GM18951 (cell line): ENCODE measurements at regions of chr19 and their contacts with region 1.

Region 1: DNA sequence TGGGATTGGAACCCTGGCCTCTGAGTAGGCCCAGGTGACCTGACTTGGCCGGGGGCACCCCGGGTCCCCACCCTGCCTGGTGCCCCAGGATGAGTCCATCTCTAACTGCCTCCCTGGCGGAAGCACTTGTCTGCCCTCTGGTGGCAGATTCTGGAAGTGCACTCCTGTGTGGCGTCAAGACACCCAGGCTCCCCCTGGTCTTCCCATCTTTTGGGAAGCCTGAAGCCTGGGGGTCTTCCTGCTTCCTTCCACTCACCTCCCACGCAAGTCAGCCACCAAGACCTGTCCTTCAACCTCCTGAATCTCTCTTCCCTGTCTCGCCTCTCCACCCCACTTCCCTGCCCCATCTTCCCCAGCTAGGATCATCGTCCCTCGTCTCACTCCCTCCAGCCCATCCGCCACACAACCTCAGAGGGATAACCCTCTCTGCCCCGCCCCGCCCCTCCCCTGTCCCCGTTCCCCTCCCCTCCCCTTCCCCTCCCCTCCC is 7.4 kb downstream of the RABAC1 start:
- POLR2A ChIP-seq: no peak

Region 2: GRCh38 chr19:41784743-41785142 is 167.0 kb before region 1 on chr19:
- in situ Hi-C with region 1: no loop called
- POLR2A ChIP-seq: no peak

Region 3: DNA sequence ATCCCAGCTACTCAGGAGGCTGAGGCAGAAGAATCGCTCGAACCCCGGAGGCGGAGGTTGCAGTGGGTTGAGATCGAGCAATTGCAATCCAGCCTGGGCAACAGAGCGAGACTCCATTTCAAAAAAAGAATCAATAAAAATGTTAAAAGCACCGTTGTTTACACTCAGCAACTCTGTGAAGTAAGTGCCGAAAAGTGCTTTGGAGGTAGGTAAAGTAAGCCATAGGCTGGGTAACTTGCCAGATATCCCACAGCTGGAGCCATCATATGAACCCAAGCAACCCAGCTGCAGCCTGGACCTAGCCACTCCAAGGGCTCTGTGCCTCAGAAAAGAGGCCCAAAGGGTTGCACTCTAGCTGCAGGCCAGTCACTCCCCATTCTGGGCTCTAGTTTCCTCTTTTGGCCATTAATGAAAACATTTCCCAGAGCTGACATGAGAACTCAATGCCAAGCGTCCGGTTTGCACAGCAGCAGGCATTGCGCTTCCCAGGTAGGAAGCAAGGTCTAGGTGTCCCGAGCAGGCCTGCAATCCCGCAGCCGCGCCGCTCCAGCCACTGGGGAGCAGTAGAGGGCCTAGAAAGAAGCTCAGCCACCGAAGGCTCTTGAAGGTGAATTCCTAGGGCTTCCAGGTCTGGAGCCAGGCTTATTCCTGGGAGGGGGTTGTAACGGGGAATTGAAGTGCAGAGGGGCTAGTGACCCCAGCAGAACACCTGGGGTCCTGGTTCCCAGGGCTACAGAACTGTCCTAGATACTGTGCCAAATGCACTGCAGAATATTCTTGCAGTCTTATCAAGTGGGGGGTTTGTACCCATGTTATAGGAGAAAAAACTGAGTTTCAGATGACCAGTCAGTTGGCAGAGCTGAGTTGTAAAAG is 78.7 kb before region 1 on chr19:
- in situ Hi-C with region 1: loop called (anchors 5 kb)
- POLR2A ChIP-seq: peak; percentile 14